Caco-2 (cell line): ENCODE measurements at regions of chr2 and their contacts with region 1.

Region 1: GRCh38 chr2:149466635-149467034 is 120.9 kb downstream of the MMADHC start:
- DNase-seq: peak; percentile 70 to 82
- H3K4me3 ChIP-seq: no peak overlapping the region
- H3K4me3 Mint-ChIP-seq: peak overlapping the region; percentile 12
- H3K27ac Mint-ChIP-seq: peak overlapping the region; percentile 63
- H3K4me1 ChIP-seq: peaks cover 35% of the 10 kb centered on the region
- H3K4me1 Mint-ChIP-seq: peaks cover 28% of the 10 kb centered on the region
- H3K27me3 ChIP-seq: no peaks in the 10 kb centered on the region
- H3K27me3 Mint-ChIP-seq: no peaks in the 10 kb centered on the region
- CTCF ChIP-seq: no peak

Region 2: DNA sequence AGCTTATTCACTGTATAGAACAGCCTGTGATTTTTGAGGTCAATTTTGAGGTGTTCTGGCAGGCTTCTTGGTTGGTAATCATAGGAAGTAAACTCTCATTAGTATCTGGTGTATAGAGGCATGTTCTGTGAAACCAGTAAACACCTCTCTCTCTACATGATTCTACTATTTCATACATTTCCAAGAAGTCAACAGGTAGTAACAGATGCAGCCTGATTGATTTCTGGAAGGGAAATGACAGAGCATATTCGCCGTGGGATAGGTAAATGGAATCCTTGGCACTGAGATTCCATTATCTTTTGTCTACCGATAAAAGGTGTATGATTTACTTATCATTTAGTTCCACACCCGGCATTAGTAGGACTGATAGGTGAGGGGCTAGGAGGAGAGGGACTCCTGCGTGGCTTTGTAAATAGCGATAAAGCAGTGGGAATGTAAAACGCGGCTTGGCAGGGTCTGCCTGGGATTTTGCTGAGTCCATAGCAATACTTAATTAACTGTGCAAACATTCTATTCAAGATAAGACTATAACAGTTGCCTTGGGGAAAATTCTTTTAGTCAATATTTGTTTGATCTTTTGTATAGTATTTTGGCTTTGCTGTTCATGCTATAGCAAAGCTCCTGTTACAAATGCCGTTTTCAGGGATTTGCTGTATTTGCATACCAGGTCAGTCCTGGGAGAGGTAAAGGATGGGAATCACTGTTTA is 395.8 kb before region 1 on chr2:
- CTCF ChIA-PET with region 1: no interaction called
- POLR2A ChIA-PET with region 1: no interaction called
- intact Hi-C with region 1: loop called (anchors 5 kb)
- DNase-seq: peak; percentile 75 to 89
- H3K4me3 ChIP-seq: 0 out of 2 replicates have a peak overlapping the region, but pooled peaks have one; percentile 3
- H3K4me3 Mint-ChIP-seq: peak overlapping the region; percentile 63
- H3K27ac Mint-ChIP-seq: peak overlapping the region; percentile 80
- H3K4me1 ChIP-seq: peaks cover 29% of the 10 kb centered on the region
- H3K4me1 Mint-ChIP-seq: peaks cover 53% of the 10 kb centered on the region
- H3K27me3 ChIP-seq: no peaks in the 10 kb centered on the region; the same call in 1 of the 2 replicates
- H3K27me3 Mint-ChIP-seq: no peaks in the 10 kb centered on the region
- CTCF ChIP-seq: no peak

Region 3: DNA sequence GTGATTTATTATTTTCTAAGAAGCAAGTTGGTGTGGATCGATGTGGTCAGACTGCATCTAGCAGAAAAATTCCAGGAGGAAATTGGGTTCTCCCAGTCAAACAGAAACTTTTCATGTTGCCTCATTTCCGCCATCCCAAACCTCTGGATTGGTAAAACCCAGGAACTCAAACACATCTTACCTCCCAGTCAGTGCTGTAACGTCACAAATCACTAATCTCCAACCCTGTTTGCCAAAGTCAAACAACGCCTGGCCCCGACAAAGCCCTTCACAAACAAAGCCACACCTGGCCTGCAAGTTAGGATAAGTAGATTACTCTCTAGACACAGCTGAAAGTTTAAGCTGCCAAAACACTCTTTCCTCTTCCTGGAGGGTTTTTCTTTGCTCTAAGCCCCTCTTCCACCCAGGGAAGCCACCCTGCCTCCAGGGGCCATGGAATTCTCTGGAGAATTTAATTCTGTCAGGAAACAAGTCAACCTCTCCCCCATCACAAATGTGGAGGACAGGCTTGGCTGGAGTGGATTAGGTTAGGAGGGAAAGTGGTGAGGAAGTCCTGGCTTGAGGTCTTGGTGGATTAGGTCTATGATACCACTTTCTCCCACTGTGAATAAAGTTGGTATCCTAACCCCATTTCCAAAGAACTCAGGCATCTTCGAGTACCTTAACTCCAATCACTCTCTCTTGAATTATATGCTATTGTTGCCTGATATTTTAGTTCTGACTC is 341.5 kb before region 1 on chr2:
- CTCF ChIA-PET with region 1: no interaction called
- POLR2A ChIA-PET with region 1: no interaction called
- intact Hi-C with region 1: loop called (anchors 1 kb)
- DNase-seq: peak; percentile 88 to 90
- H3K4me3 ChIP-seq: 0 out of 2 replicates have a peak overlapping the region, but pooled peaks have one; percentile 5
- H3K4me3 Mint-ChIP-seq: peak overlapping the region; percentile 54
- H3K27ac Mint-ChIP-seq: peak overlapping the region; percentile 78
- H3K4me1 ChIP-seq: peaks cover 39% of the 10 kb centered on the region
- H3K4me1 Mint-ChIP-seq: peaks cover 39% of the 10 kb centered on the region
- H3K27me3 ChIP-seq: no peaks in the 10 kb centered on the region
- H3K27me3 Mint-ChIP-seq: no peaks in the 10 kb centered on the region
- CTCF ChIP-seq: no peak

Region 4: DNA sequence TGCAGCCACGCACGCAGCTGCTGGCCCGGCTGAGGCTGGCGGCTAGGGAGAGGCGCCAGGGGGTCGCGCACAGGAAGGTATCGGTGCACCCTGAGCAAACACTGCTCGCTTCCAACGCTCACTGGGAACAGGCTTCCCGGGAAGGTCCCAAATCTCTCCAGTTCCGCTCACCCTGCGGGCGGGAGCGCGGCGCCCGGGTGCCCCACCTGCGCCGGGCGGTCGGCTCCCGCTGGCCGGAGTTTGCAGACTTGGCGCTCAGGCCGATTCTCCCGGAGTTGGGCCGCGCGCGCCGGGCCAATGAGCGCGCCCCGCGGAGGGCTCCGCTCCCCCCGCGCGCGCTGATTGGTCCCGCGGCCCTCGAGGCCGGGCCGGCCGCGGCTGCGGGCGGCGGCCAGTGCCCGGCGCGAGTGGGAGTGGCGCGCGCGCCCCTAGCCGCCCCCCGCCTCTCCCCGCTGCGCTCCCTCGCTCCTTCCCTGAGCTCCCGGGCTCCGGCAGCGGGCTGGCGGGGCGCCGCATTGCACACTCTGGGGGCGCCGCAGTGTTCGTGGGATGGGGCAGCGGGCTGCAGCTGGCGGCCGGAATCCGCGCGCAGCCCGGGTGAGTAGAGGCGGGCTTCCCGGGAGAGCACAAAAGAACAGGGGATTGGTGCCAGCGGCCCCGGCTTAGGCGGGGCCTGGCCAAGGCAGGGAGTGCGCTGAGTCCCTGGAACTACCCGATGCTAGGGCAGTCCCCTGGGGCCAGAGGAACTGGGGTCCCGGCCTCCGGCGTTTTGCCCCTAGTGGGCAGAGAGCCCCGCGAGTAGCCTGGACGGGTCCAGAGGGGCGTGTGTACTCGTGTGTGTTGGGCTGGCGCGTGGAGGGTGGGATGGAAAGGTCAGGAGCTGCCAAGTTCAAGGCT is 136.3 kb before region 1 on chr2 and contains the start of gene LYPD6:
- CTCF ChIA-PET with region 1: no interaction called
- POLR2A ChIA-PET with region 1: no interaction called
- intact Hi-C with region 1: loop called (anchors 1 kb)
- DNase-seq: peak; percentile 75 to 89
- H3K4me3 ChIP-seq: peak within 1 kb of the TSS; percentile 89
- H3K4me3 Mint-ChIP-seq: peak within 1 kb of the TSS; percentile 92
- H3K27ac Mint-ChIP-seq: peak within 1 kb of the TSS; percentile 72
- H3K4me1 ChIP-seq: no peaks in the 10 kb centered on the region; the same call in 1 of the 2 replicates
- H3K4me1 Mint-ChIP-seq: peaks cover 22% of the 10 kb centered on the region
- H3K27me3 ChIP-seq: no peaks in the 10 kb centered on the region
- H3K27me3 Mint-ChIP-seq: no peaks in the 10 kb centered on the region
- CTCF ChIP-seq: no peak
- total RNA-seq, gene LYPD6: 9.0 and 10.5 TPM in 2 replicates

Region 5: GRCh38 chr2:149422339-149423309 is 44.0 kb before region 1 on chr2:
- CTCF ChIA-PET with region 1: interaction called, 3 read pairs
- POLR2A ChIA-PET with region 1: no interaction called
- intact Hi-C with region 1: loop called (anchors 1 kb)
- DNase-seq: peak; percentile 56 to 83
- H3K4me3 ChIP-seq: no peak overlapping the region
- H3K4me3 Mint-ChIP-seq: peak overlapping the region; percentile 2
- H3K27ac Mint-ChIP-seq: peak overlapping the region; percentile 71
- H3K4me1 ChIP-seq: peaks cover 56% of the 10 kb centered on the region
- H3K4me1 Mint-ChIP-seq: peaks cover 41% of the 10 kb centered on the region
- H3K27me3 ChIP-seq: no peaks in the 10 kb centered on the region
- H3K27me3 Mint-ChIP-seq: no peaks in the 10 kb centered on the region
- CTCF ChIP-seq: no peak

Region 6: DNA sequence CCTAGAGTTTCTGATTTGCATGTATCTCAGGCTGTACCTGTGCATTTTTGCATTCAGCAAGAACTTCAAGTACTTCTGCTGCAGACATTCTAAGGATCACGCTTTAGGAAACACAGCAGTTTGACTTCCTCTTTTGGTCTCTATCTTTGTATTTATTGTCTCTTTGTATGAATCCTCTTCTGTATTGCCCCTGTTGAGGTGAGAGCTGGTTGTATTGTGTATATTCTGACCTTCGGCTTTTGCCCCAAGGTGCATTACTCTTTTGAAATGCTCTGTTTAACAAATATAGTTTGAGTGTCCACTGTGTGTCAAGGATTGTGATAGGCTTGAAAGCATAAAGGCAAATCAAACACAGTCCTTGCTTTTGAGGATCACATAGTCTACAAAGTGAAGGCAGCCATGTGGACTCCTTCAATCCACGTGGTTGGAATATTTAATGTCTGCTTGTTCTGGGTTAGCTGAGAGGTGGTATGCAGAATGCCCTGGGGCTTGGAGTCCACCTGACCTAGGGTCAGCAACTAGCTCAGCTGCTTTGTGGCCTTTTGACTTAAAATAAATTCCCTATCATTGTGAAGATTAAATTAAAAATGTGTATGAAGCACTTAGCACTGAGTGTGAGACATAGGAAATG is 28.2 kb before region 1 on chr2:
- CTCF ChIA-PET with region 1: no interaction called
- POLR2A ChIA-PET with region 1: no interaction called
- intact Hi-C with region 1: loop called (anchors 1 kb)
- DNase-seq: peak; percentile 64 to 69
- H3K4me3 ChIP-seq: no peak overlapping the region
- H3K4me3 Mint-ChIP-seq: no peak overlapping the region
- H3K27ac Mint-ChIP-seq: peak overlapping the region; percentile 6
- H3K4me1 ChIP-seq: peaks cover 22% of the 10 kb centered on the region
- H3K4me1 Mint-ChIP-seq: peaks cover 22% of the 10 kb centered on the region
- H3K27me3 ChIP-seq: no peaks in the 10 kb centered on the region
- H3K27me3 Mint-ChIP-seq: no peaks in the 10 kb centered on the region
- CTCF ChIP-seq: no peak

Region 7: GRCh38 chr2:149507974-149508373 is 41.3 kb after region 1 on chr2:
- CTCF ChIA-PET with region 1: no interaction called
- POLR2A ChIA-PET with region 1: no interaction called
- intact Hi-C with region 1: loop called (anchors 2 kb)
- DNase-seq: no peak
- H3K4me3 ChIP-seq: no peak overlapping the region
- H3K4me3 Mint-ChIP-seq: no peak overlapping the region
- H3K27ac Mint-ChIP-seq: no peak overlapping the region
- H3K4me1 ChIP-seq: peaks cover 5% of the 10 kb centered on the region; the same call in 1 of the 2 replicates
- H3K4me1 Mint-ChIP-seq: peaks cover 12% of the 10 kb centered on the region
- H3K27me3 ChIP-seq: no peaks in the 10 kb centered on the region
- H3K27me3 Mint-ChIP-seq: no peaks in the 10 kb centered on the region
- CTCF ChIP-seq: no peak